CD4-positive, alpha-beta memory T cell (primary cell): ENCODE measurements at regions of chr18 and their contacts with region 1.

Region 1: DNA sequence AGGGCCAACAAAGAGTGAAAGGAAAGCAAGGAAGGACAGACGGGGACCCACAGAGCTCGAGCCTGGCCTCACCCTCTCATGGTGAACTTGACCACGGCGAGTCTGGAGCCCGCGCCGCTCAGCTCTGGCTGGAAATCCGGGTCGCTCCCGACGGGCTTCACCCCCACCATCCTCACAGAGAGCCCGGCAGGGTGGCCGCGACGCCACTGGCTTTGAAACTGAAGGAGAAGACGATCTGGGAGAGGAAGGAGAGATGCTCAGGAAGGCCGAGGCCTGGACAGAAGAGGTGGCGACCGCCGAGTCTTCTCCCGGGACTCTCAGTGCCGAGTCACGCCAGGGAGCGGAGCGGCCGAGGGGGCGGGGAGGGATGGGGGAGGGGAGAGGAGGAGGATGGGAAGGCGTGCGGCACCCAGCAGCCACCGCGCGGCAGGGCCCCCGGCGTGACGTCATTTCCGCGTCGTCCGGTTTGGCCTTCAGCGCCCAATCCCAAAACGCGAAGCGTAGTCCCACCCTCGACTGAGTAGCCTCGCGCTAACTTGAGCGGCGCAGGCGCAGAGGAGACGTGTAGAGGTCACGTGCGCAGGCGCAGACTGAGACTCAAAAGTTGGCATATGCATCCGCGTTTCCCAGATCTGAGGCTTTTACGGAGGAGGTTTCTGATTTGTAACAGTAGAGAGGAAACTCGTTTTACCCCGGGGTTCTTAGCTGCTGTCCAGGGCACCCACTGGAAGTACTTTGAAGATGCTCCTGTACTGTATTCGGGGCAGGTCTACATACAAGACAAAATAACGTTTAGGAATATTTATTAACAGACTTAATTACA is at the start of gene TXNL1:
- DNase-seq: peak; percentile 97 to 99 (median 98)
- H3K4me3 ChIP-seq: peak within 1 kb of the TSS; percentile 64 to 93
- H3K4me3 Mint-ChIP-seq: peak within 1 kb of the TSS; percentile 95 to 100 (median 99)
- H3K27ac ChIP-seq: peak within 1 kb of the TSS; percentile 80
- H3K27ac Mint-ChIP-seq: peak within 1 kb of the TSS; percentile 89 to 99 (median 98)
- H3K4me1 ChIP-seq: peaks cover 42% of the 10 kb centered on the region
- H3K4me1 Mint-ChIP-seq: peaks cover 37 to 53% (median 45%) of the 10 kb centered on the region in 4 donors
- H3K27me3 ChIP-seq: no peaks in the 10 kb centered on the region
- H3K27me3 Mint-ChIP-seq: no peaks in the 10 kb centered on the region
- total RNA-seq, gene TXNL1: 41.4 to 42.3 TPM

Region 2: DNA sequence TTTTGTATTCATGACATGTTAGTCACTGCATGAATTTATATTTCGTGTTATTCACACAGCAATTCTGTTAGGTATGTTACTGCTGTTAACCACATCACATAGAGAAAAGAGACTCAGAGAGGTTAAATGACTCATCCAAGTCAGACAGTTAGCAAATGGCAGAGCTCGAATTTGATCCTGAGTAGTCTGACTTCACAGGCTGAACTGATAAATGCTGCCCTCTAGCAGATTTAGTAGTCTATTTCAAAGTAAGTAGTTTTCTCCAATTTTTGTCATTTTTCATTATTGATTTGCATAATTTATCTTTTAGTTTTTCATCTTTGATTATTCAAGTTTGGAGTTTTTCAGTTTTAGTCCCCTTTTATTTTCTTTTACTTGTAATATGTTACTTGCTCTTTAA is 71.0 kb after region 1 on chr18:
- CTCF ChIA-PET with region 1: interaction called, 6 read pairs
- POLR2A ChIA-PET with region 1: no interaction called
- intact Hi-C with region 1: loop called (anchors 5 kb)
- DNase-seq: peak; percentile 41 to 64 (median 54)
- H3K4me3 ChIP-seq: no peak overlapping the region
- H3K4me3 Mint-ChIP-seq: no peak overlapping the region
- H3K27ac ChIP-seq: no peak overlapping the region
- H3K27ac Mint-ChIP-seq: no peak overlapping the region
- H3K4me1 ChIP-seq: peaks cover 5% of the 10 kb centered on the region
- H3K4me1 Mint-ChIP-seq: peaks cover 0 to 4% (median 2%) of the 10 kb centered on the region in 4 donors
- H3K27me3 ChIP-seq: no peaks in the 10 kb centered on the region
- H3K27me3 Mint-ChIP-seq: no peaks in the 10 kb centered on the region